Heart right ventricle (tissue), 16 donors: ENCODE measurements at regions of chr7 and their contacts with region 1.

Region 1: DNA sequence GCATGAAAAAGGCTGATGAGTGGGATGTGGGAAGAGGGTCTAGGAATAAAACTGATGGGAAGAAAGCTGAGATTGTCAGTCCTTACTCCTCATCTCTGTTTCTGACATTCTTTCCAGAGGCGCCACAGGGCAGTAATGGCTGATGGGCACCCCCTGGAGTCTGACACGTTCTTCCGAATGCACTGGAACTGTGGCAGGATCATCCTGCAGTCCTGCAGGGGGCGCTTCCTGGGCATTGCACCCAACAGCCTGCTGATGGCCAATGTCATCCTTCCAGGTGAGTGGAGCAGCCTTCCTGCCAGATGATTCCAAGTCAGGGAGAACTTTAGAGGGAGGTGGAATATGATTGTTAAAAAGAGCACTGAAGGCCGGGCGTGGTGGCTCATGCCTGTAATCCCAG is 4.8 kb downstream of the FSCN3 start:
- DNase-seq: no peak
- ATAC-seq: no peak
- H3K4me3 ChIP-seq: no peak overlapping the region
- H3K27ac ChIP-seq: no peak overlapping the region
- H3K4me1 ChIP-seq: peaks cover 0 to 10% (median 0%) of the 10 kb centered on the region in 9 donors
- H3K27me3 ChIP-seq: no peaks in the 10 kb centered on the region
- CTCF ChIP-seq: peak in 2 of 9 donors; percentile 18 to 24

Region 2: DNA sequence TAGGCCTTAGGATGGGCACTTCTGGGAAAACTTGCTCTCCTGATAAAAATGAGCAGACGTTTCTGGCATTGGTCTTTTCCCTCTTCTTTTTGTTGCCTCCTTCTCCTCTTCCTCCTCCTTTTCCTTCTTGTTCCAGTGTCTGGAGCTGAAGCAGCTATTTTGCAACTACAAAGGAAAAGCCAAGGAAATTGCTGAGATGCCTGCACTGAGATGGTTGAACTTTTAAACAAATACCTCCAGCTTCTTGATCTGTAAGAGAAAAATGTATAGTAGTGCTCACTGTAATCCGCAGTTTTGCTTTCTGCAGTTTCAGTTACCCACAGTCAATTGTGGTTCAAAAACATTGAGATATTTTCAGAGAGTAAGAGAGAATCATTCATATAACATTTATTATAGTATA is 46.2 kb after region 1 on chr7:
- intact Hi-C with region 1: loop called in 1 of 10 experiments (anchors 10 kb)
- DNase-seq: no peak
- ATAC-seq: no peak
- H3K4me3 ChIP-seq: no peak overlapping the region
- H3K27ac ChIP-seq: no peak overlapping the region
- H3K4me1 ChIP-seq: no peaks in the 10 kb centered on the region
- H3K27me3 ChIP-seq: peaks cover 0 to 6% (median 0%) of the 10 kb centered on the region in 7 donors
- CTCF ChIP-seq: no peak

Region 3: GRCh38 chr7:128361411-128362379 is 763.4 kb after region 1 on chr7 and contains the start of gene PRRT4:
- intact Hi-C with region 1: no loop called
- DNase-seq: peak in 1 of 2 donors; percentile 50
- ATAC-seq: peak; percentile 23 to 71 (median 48)
- H3K4me3 ChIP-seq: peak within 1 kb of the TSS; percentile 35 to 68 (median 54)
- H3K27ac ChIP-seq: peak within 1 kb of the TSS in 1 of 10 donors; percentile 43
- H3K4me1 ChIP-seq: peaks cover 0 to 36% (median 15%) of the 10 kb centered on the region in 9 donors
- H3K27me3 ChIP-seq: peaks cover 0 to 55% (median 18%) of the 10 kb centered on the region in 7 donors
- CTCF ChIP-seq: no peak
- total RNA-seq, gene PRRT4: 0.73 to 3.1 (median 2.0) TPM